BJ (cell line): ENCODE measurements at regions of chr22 and their contacts with region 1.

Region 1: DNA sequence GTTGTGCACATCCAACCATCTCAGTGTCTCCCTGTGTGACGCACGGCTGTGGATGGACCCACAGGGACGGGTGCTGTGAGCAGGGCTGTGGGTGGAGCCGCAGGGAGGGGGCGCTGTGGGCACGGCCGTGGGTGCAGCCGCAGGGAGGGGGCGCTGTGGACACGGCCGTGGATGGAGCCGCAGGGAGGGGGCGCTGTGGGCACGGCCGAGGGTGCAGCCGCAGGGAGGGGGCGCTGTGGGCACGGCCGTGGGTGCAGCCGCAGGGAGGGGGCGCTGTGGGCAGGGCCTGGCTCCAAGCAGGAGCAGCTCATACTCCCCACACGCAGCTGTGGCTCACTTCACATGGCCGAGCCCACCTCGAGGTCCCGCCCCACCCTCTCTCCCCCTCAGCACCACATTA is 6.0 kb upstream of the MAPK11 start:
- DNase-seq: no peak
- H3K4me3 ChIP-seq: no peak overlapping the region
- H3K27me3 ChIP-seq: no peaks in the 10 kb centered on the region
- CTCF ChIP-seq: peak; percentile 48

Region 2: DNA sequence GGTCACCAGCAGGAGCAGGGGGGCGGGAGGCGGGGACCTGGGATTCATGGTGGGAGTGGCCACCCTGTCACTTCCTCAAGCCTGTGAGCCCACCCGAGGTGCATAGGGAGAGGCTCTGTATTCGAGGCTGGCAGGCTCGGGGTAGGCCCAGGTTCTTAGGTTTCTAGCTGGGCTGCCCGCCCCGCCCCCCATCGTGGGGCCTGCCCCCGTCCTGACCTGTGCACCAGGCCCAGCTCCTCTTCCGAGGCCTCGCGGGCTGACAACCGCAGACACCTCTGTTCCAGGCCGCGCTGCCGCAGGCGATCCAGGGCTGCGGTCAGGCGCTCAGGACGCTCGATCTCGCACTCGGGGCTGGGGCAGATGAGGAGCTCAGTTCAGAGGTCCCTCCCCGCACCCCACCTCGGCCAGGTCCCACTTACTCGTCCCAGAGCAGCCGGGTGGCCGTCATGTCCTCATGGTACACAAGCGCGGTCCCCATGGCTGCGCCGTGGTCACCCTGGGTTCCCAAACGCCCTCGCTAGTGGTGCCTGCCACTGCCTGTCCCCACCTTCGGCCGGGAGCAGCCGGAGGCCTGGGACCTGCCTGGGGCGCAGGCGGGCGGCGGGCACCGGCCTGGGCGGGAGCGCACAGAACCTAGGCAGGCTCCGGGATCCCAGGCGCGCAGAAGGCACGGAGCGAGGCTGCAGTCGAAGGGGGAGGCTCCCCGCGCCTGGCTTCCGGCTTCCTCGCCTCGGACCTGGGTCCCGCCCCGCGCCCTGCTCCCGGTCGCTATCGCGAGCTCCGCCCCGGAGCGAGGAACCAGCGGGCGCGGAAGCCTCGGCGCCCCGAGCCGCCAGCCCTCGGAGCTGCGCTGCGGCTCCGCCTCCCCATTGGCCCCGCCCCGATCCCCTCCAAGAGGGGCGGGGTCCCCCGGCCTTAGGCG is 25.3 kb before region 1 on chr22 and contains the start of gene HDAC10:
- CTCF ChIA-PET with region 1: interaction called, 13 read pairs
- POLR2A ChIA-PET with region 1: no interaction called
- DNase-seq: no peak
- H3K4me3 ChIP-seq: peak within 1 kb of the TSS; percentile 65
- H3K27me3 ChIP-seq: no peaks in the 10 kb centered on the region
- CTCF ChIP-seq: no peak
- polyA plus RNA-seq, gene HDAC10: 8.8 and 18.2 TPM in 2 replicates

Region 3: GRCh38 chr22:50293441-50294318 is 17.5 kb after region 1 on chr22:
- CTCF ChIA-PET with region 1: interaction called, 25 read pairs
- POLR2A ChIA-PET with region 1: interaction called, 3 read pairs
- DNase-seq: no peak
- H3K4me3 ChIP-seq: peak overlapping the region; percentile 25
- H3K27me3 ChIP-seq: no peaks in the 10 kb centered on the region
- CTCF ChIP-seq: no peak

Region 4: DNA sequence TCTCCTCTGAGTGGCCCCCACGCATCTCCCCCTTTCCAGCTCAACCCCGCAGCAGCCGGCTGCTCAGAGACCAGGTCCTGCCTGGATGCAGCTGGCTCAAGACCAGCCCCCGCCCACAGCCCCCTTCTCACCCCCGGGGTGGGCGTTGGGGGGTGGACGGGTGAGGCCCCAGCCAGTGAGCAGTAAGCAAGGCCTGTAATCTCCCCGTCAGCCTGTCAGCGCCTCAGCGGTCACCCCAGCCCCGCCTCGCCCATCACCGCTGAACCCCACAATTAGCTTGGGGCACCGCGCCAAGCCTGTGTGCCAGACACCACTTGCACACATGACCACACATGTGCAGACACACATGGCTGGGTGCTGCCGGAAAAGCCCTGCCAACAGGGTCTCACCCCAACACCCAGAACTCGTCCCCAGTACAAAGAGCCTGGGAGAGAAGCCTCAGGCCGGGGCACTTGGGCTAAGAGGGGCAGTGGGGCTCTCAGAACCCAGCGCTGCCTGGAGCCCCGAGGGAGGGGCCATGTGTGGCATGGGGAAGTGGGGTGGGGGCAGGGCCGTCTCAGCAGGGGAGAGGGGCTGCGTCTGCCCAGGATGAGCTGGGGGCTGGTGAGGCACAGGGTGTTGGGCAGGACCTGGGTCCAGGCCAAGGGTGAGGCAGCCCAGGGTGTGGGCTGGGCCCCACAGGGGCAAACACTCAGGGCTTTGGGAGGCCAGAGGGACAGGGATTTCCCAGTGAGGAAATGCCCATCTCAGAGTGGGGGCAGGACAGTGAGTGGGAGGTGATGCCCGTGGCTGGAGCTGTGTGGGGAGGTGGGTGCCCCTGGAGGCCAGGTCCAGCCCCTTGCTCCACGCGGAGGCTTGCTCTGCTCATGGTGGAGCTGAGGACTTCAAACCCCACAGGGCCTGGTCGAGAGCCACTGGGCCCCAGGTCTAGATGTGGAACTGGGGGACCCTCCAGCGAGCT is 25.7 kb after region 1 on chr22:
- CTCF ChIA-PET with region 1: interaction called, 38 read pairs
- POLR2A ChIA-PET with region 1: no interaction called
- DNase-seq: no peak
- H3K4me3 ChIP-seq: no peak overlapping the region
- H3K27me3 ChIP-seq: no peaks in the 10 kb centered on the region
- CTCF ChIP-seq: no peak

Region 5: GRCh38 chr22:50306753-50307749 is 30.9 kb after region 1 on chr22 and contains the start of gene PLXNB2:
- CTCF ChIA-PET with region 1: interaction called, 38 read pairs
- POLR2A ChIA-PET with region 1: no interaction called
- DNase-seq: no peak
- H3K4me3 ChIP-seq: peak within 1 kb of the TSS; percentile 98
- H3K27me3 ChIP-seq: no peaks in the 10 kb centered on the region
- CTCF ChIP-seq: no peak
- polyA plus RNA-seq, gene PLXNB2: 83.7 and 143 TPM in 2 replicates

Region 6: GRCh38 chr22:50341977-50342650 is 66.0 kb after region 1 on chr22:
- CTCF ChIA-PET with region 1: interaction called, 16 read pairs
- POLR2A ChIA-PET with region 1: no interaction called
- DNase-seq: no peak
- H3K4me3 ChIP-seq: peak overlapping the region; percentile 81
- H3K27me3 ChIP-seq: no peaks in the 10 kb centered on the region
- CTCF ChIP-seq: peak; percentile 98